Uterus (tissue), 4 donors: ENCODE measurements at regions of chr6 and their contacts with region 1.

Region 1: DNA sequence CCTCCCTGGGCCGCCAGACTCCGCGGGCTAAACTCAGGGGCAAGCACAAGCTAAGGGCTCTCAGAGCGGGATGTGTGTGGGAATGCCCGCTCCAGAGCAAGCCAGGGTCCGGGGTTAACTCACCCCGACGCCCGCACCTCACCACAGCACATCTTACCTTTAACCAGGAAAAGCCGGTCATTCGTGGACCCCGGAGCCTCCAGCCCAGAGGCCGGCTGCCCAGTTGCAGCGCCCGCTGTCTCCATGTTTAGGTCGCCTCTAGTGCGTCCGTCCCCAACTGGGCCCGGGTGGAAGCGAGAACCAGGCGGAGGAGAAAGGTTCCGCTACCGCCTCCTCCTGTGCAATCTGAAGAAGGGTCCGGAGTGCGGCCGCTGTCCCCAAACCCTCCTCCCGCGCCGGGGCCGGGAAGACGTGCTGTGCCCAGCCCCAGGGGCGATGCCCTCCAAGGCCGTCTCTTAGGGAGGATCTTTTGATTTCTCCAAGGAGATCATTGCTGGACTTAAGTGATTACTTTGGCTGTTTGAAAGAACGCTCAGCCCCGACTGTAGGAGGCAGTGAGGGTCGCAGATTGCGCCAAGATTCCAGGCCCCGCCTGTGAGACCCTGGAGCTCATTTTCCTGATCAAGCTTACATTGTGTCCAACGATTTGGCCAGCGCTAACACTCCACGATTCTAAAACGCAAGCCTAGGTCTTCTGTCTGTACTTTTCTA is at the start of gene TMEM242:
- DNase-seq: peak; percentile 89 to 94
- H3K4me3 ChIP-seq: peak within 1 kb of the TSS; percentile 73 to 95
- H3K27ac ChIP-seq: peak within 1 kb of the TSS; percentile 91 to 93
- H3K4me1 ChIP-seq: no peaks in the 10 kb centered on the region
- H3K27me3 ChIP-seq: no peaks in the 10 kb centered on the region
- CTCF ChIP-seq: peak; percentile 16 to 51 (median 46)
- POLR2A ChIP-seq: peak; percentile 44 to 70
- total RNA-seq, gene TMEM242: 3.3 to 14.2 (median 11.8) TPM

Region 2: DNA sequence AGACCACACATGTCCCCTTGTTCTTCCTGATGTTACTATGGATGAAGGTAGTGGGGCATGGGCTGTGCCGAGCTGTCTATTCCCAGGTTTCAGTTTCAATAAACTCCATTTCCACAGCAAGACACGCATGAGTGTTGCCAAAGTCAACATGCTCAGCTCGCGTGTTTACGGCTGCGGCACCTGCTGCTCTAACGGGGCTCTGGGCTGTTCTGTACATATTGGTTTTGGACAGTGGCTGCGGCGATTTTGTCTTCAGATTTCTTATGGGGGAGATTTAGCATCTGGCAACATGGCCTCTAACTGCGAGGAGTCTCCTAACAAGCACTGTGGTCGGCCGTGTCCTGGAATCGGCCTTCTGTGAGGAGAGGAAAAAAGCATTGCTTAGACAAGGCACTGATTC is 58.7 kb before region 1 on chr6:
- intact Hi-C with region 1: no loop called
- DNase-seq: no peak
- H3K4me3 ChIP-seq: no peak overlapping the region
- H3K27ac ChIP-seq: no peak overlapping the region
- H3K4me1 ChIP-seq: peaks cover 0 to 8% of the 10 kb centered on the region in 2 donors
- H3K27me3 ChIP-seq: no peaks in the 10 kb centered on the region
- CTCF ChIP-seq: no peak
- POLR2A ChIP-seq: no peak

Region 3: DNA sequence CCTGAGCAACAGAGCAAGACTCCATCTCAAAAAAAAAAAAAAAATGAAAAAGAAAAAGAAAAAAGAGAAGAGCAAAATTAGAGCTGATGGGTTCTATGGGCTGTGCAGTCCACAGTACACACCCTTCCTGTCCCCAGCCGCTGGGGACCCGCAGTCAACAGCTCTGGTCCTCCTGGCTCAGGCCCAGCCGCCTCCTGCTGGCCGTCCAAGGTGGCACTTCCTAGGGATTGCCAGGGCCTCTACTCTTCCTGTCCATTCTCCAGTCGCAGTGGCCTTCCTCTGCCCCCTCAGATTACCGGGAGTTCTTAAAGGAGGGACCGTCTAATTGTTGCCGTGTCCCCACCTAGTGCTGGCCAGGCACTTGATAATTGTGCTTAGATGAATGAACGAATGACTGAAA is 41.8 kb before region 1 on chr6:
- intact Hi-C with region 1: no loop called
- DNase-seq: no peak
- H3K4me3 ChIP-seq: no peak overlapping the region
- H3K27ac ChIP-seq: no peak overlapping the region
- H3K4me1 ChIP-seq: no peaks in the 10 kb centered on the region
- H3K27me3 ChIP-seq: no peaks in the 10 kb centered on the region
- CTCF ChIP-seq: no peak
- POLR2A ChIP-seq: no peak

Region 4: GRCh38 chr6:157379656-157380454 is 56.4 kb after region 1 on chr6:
- intact Hi-C with region 1: loop called (anchors 10 kb)
- DNase-seq: peak; percentile 89 to 92
- H3K4me3 ChIP-seq: peak overlapping the region; percentile 88 to 97
- H3K27ac ChIP-seq: peak overlapping the region; percentile 95 to 96
- H3K4me1 ChIP-seq: peaks cover 0 to 8% of the 10 kb centered on the region in 2 donors
- H3K27me3 ChIP-seq: no peaks in the 10 kb centered on the region
- CTCF ChIP-seq: no peak
- POLR2A ChIP-seq: peak in 1 of 2 donors; percentile 15

Region 5: GRCh38 chr6:157667211-157668008 is 344.0 kb after region 1 on chr6:
- intact Hi-C with region 1: loop called (anchors 10 kb)
- DNase-seq: peak; percentile 52 to 72
- H3K4me3 ChIP-seq: no peak overlapping the region
- H3K27ac ChIP-seq: peak overlapping the region; percentile 73 to 77
- H3K4me1 ChIP-seq: peaks cover 14 to 16% of the 10 kb centered on the region in 2 donors
- H3K27me3 ChIP-seq: no peaks in the 10 kb centered on the region
- CTCF ChIP-seq: peak; percentile 81 to 86 (median 84)
- POLR2A ChIP-seq: no peak